Activated CD8-positive, alpha-beta T cell treated with anti-CD3 and anti-CD28 coated beads, Interleukin-2, amount 10 ng/mL, durations not matched to agents 7 days and 5 days (primary cell): ENCODE measurements at regions of chr10 and their contacts with region 1.

Region 1: GRCh38 chr10:102476466-102477141 is 25.3 kb upstream of the C10orf95 start:
- DNase-seq: peak; percentile 33
- ATAC-seq: no peak
- H3K4me3 Mint-ChIP-seq: no peak overlapping the region
- H3K27ac Mint-ChIP-seq: peak overlapping the region; percentile 72
- H3K4me1 Mint-ChIP-seq: peaks cover 29% of the 10 kb centered on the region
- H3K27me3 Mint-ChIP-seq: no peaks in the 10 kb centered on the region

Region 2: DNA sequence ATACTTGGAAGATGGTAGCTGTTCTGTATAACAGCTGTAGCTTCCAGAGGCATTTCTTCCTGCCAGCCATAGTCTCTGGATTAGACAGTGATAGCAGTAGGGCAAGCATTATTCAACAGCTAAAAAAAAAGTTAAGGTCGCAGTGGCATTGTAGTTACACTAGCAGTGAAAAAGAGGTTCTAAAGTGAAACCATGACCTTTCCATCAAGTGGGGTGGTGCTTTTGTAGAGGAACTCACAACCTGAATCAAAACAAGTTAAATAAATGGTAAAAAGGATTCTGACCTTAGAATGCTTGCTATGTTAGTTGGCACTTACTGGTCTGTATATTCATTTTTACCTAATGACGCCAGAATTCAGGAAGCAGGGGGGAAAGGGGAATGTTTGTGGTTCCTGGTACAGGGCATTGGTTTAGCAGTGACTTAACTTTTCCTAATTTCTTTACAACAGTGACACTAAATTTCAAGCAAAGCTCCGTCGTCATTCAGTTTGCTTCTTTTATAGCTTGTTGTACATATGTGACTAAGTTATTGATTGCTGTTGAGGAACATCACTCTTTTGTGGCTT is 176.2 kb before region 1 on chr10:
- CTCF ChIA-PET with region 1: no interaction called
- POLR2A ChIA-PET with region 1: no interaction called
- DNase-seq: no peak
- ATAC-seq: no peak
- H3K4me3 Mint-ChIP-seq: no peak overlapping the region
- H3K27ac Mint-ChIP-seq: no peak overlapping the region
- H3K4me1 Mint-ChIP-seq: peaks cover 17% of the 10 kb centered on the region
- H3K27me3 Mint-ChIP-seq: no peaks in the 10 kb centered on the region

Region 3: GRCh38 chr10:102450194-102450938 is 26.2 kb before region 1 on chr10:
- CTCF ChIA-PET with region 1: interaction called, 19 read pairs
- POLR2A ChIA-PET with region 1: interaction called, 9 read pairs
- DNase-seq: peak; percentile 93
- ATAC-seq: peak; percentile 85
- H3K4me3 Mint-ChIP-seq: peak overlapping the region; percentile 90
- H3K27ac Mint-ChIP-seq: peak overlapping the region; percentile 93
- H3K4me1 Mint-ChIP-seq: peaks cover 47% of the 10 kb centered on the region
- H3K27me3 Mint-ChIP-seq: no peaks in the 10 kb centered on the region

Region 4: GRCh38 chr10:102673819-102674511 is 197.4 kb after region 1 on chr10:
- CTCF ChIA-PET with region 1: no interaction called
- POLR2A ChIA-PET with region 1: no interaction called
- DNase-seq: peak; percentile 89
- ATAC-seq: peak; percentile 93
- H3K4me3 Mint-ChIP-seq: peak overlapping the region; percentile 70
- H3K27ac Mint-ChIP-seq: peak overlapping the region; percentile 87
- H3K4me1 Mint-ChIP-seq: peaks cover 52% of the 10 kb centered on the region
- H3K27me3 Mint-ChIP-seq: no peaks in the 10 kb centered on the region